Activated B cell treated with CpG ODN at 0.5 μM for 24 hours (primary cell): ENCODE measurements at regions of chr2 and their contacts with region 1.

Region 1: DNA sequence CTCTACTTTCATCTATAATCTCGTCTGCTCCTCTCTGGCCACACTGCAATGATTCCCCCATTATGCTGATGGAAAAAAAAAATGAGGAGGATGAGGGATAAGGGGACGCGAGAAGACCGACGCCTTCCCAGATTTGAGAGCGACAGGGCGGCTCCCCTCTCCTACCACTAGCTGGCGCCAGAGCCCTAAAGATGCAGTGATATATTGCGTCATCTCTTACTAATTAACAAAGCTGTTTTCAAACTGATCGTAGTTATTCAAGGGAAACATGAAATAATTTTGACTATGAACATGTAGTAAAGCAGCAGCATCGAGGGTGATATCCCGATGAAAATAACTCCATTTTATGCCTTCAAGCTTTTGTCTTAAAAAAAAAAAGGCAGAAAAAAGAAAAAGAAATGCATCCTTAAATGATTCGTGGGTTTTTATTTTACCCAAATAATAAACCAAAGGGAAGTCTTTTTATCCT is 48.0 kb upstream of the HNRNPA3 start:
- DNase-seq: peak; percentile 65
- ATAC-seq: peak; percentile 56
- H3K4me3 Mint-ChIP-seq: no peak overlapping the region
- H3K27ac Mint-ChIP-seq: no peak overlapping the region
- H3K4me1 Mint-ChIP-seq: peaks cover 5% of the 10 kb centered on the region
- H3K27me3 Mint-ChIP-seq: peaks cover 2% of the 10 kb centered on the region
- CTCF ChIP-seq: peak; percentile 89

Region 2: DNA sequence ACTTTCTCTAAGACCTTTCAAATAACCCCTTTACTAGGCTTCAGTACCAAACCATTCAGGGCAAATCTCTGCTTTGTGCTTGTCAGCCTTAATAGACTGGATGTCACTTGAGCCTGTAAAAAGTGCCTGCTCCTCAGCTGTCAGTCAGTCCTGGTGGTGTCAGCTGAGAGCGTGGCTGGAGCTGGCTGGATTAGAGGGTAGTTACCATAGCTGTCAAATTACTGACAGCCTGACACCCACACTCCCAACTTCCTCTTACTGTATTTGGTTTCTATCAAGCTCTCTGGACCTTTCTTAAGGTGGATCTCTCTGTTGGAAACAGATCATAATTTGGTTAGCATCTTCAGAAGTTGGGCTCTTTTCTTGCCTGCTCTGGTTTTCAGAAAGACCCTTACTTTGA is 1611.7 kb before region 1 on chr2:
- CTCF ChIA-PET with region 1: no interaction called
- POLR2A ChIA-PET with region 1: no interaction called
- intact Hi-C with region 1: no loop called
- DNase-seq: no peak
- ATAC-seq: no peak
- H3K4me3 Mint-ChIP-seq: no peak overlapping the region
- H3K27ac Mint-ChIP-seq: no peak overlapping the region
- H3K4me1 Mint-ChIP-seq: no peaks in the 10 kb centered on the region
- H3K27me3 Mint-ChIP-seq: peaks cover 11% of the 10 kb centered on the region
- CTCF ChIP-seq: no peak

Region 3: DNA sequence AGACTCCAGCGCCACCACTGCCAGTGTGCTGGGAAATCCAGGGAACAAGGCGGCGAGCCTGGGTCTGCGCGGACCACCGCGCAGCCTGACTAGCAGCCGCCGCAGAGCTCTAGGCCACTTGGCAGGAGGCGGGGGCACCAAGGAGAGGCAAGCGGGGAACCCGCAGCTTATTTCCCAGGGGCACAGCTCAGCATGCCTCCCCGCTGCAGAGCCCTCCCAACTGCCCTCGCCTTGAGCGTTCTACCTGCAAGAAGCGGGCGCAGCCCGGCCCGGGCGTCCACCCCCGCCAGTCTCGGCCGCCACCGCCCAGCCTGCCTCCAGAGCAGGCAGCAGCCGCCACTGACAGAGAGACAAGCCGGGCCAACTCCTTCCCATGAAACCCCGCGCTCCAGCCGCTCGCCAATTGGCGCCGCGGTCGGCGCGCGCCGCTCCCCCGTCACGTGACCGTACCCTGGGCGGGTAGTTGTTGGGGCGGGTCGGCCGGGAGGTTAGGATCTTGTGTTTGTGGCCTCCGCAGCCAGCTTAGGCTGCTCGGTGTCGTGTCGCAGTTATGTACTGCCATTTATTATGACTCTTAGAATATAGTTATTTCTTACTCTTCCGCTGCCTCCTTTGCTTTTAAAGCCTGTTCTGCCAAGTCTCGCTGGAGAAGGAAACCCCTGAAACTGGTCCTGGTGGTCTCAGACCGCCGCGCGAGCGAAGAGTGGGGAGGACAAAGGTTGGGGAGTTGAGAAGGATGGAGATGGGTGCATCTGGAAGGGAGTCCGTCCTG is 1162.5 kb before region 1 on chr2 and contains the start of gene LNPK:
- CTCF ChIA-PET with region 1: no interaction called
- POLR2A ChIA-PET with region 1: no interaction called
- intact Hi-C with region 1: loop called (anchors 10 kb)
- DNase-seq: peak; percentile 83
- ATAC-seq: peak; percentile 92
- H3K4me3 Mint-ChIP-seq: peak within 1 kb of the TSS; percentile 82
- H3K27ac Mint-ChIP-seq: peak within 1 kb of the TSS; percentile 31
- H3K4me1 Mint-ChIP-seq: peaks cover 16% of the 10 kb centered on the region
- H3K27me3 Mint-ChIP-seq: no peaks in the 10 kb centered on the region
- CTCF ChIP-seq: no peak
- total RNA-seq, gene LNPK: 15.2 TPM in 2 replicates

Region 4: GRCh38 chr2:177029480-177029879 is 135.1 kb before region 1 on chr2:
- CTCF ChIA-PET with region 1: no interaction called
- POLR2A ChIA-PET with region 1: no interaction called
- intact Hi-C with region 1: no loop called
- DNase-seq: no peak
- ATAC-seq: no peak
- H3K4me3 Mint-ChIP-seq: no peak overlapping the region
- H3K27ac Mint-ChIP-seq: no peak overlapping the region
- H3K4me1 Mint-ChIP-seq: no peaks in the 10 kb centered on the region
- H3K27me3 Mint-ChIP-seq: peaks cover 7% of the 10 kb centered on the region
- CTCF ChIP-seq: no peak

Region 5: DNA sequence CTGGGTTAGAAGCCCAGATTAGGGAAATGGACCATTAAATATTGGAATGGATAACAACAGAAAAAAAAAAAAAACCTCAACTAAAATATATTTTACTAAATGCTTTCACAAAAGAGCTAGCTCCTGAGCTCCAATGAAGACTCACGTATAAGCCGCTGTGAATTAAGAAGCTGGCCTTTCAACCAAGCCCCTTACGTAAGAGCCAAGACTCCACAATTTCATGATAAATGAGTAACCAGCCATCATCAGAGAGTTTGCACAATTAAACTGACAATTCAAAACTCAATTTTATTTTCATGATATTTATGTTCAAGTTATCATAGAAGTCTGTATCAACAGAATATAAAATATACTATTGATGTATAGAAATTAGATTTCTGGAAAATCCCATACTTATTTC is 22.8 kb before region 1 on chr2:
- CTCF ChIA-PET with region 1: no interaction called
- POLR2A ChIA-PET with region 1: no interaction called
- intact Hi-C with region 1: no loop called
- DNase-seq: no peak
- ATAC-seq: no peak
- H3K4me3 Mint-ChIP-seq: no peak overlapping the region
- H3K27ac Mint-ChIP-seq: no peak overlapping the region
- H3K4me1 Mint-ChIP-seq: no peaks in the 10 kb centered on the region
- H3K27me3 Mint-ChIP-seq: peaks cover 16% of the 10 kb centered on the region
- CTCF ChIP-seq: no peak

Region 6: GRCh38 chr2:177195194-177195593 is 30.6 kb after region 1 on chr2:
- CTCF ChIA-PET with region 1: interaction called, 18 read pairs
- POLR2A ChIA-PET with region 1: no interaction called
- intact Hi-C with region 1: no loop called
- DNase-seq: no peak
- ATAC-seq: no peak
- H3K4me3 Mint-ChIP-seq: no peak overlapping the region
- H3K27ac Mint-ChIP-seq: no peak overlapping the region
- H3K4me1 Mint-ChIP-seq: no peaks in the 10 kb centered on the region
- H3K27me3 Mint-ChIP-seq: no peaks in the 10 kb centered on the region
- CTCF ChIP-seq: no peak

Region 7: GRCh38 chr2:177275041-177276020 is 110.7 kb after region 1 on chr2:
- CTCF ChIA-PET with region 1: interaction called, 10 read pairs
- POLR2A ChIA-PET with region 1: no interaction called
- intact Hi-C with region 1: no loop called
- DNase-seq: no peak
- ATAC-seq: no peak
- H3K4me3 Mint-ChIP-seq: no peak overlapping the region
- H3K27ac Mint-ChIP-seq: no peak overlapping the region
- H3K4me1 Mint-ChIP-seq: peaks cover 4% of the 10 kb centered on the region
- H3K27me3 Mint-ChIP-seq: no peaks in the 10 kb centered on the region
- CTCF ChIP-seq: no peak

Region 8: DNA sequence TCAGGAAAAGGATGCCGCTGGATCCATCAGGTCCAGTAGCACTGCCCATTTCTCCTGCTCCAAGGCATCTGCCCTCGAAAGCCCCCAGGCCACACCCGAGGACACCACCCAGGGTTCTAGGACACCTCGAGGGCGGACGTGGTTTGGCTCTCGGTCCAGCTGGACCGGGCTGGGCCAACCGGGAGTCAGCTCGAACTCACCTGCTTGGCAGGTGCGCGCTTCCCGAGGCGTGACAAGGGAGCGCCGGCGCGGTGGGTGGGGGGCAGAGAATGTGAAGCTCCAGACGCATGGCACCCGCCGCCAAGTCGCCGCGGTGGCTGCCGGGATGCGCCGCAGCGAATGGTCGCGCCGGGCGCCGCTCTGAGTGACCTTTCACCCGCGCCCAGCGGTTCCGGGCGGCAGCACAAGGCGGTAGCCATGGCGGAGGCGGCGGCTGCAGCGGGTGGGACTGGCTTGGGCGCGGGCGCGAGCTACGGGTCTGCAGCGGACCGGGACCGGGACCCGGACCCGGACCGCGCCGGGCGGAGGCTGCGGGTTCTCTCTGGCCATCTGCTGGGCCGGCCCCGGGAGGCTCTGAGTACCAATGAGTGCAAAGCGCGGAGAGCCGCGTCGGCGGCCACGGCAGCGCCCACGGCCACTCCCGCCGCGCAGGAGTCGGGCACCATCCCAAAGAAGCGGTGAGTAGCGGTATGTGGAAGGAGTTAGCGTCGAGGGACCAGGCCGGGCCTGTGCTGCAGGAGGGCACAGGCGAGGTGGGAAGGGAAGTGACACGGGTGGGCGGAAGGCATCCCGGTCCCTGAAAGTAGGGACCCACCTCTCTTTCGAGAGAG is 228.0 kb after region 1 on chr2 and contains the start of gene AGPS:
- CTCF ChIA-PET with region 1: interaction called, 10 read pairs
- POLR2A ChIA-PET with region 1: interaction called, 9 read pairs
- intact Hi-C with region 1: no loop called
- DNase-seq: peak; percentile 66
- ATAC-seq: peak; percentile 93
- H3K4me3 Mint-ChIP-seq: peak within 1 kb of the TSS; percentile 92
- H3K27ac Mint-ChIP-seq: peak within 1 kb of the TSS; percentile 69
- H3K4me1 Mint-ChIP-seq: peaks cover 42% of the 10 kb centered on the region
- H3K27me3 Mint-ChIP-seq: no peaks in the 10 kb centered on the region
- CTCF ChIP-seq: no peak
- total RNA-seq, gene AGPS: 29.0 and 29.9 TPM in 2 replicates

Region 9: GRCh38 chr2:177467646-177468045 is 303.0 kb after region 1 on chr2:
- CTCF ChIA-PET with region 1: no interaction called
- POLR2A ChIA-PET with region 1: no interaction called
- intact Hi-C with region 1: no loop called
- DNase-seq: no peak
- ATAC-seq: no peak
- H3K4me3 Mint-ChIP-seq: no peak overlapping the region
- H3K27ac Mint-ChIP-seq: no peak overlapping the region
- H3K4me1 Mint-ChIP-seq: no peaks in the 10 kb centered on the region
- H3K27me3 Mint-ChIP-seq: no peaks in the 10 kb centered on the region
- CTCF ChIP-seq: no peak

Region 10: GRCh38 chr2:177489719-177490301 is 325.2 kb after region 1 on chr2:
- CTCF ChIA-PET with region 1: no interaction called
- POLR2A ChIA-PET with region 1: no interaction called
- intact Hi-C with region 1: loop called (anchors 1 kb)
- DNase-seq: no peak
- ATAC-seq: no peak
- H3K4me3 Mint-ChIP-seq: no peak overlapping the region
- H3K27ac Mint-ChIP-seq: no peak overlapping the region
- H3K4me1 Mint-ChIP-seq: no peaks in the 10 kb centered on the region
- H3K27me3 Mint-ChIP-seq: no peaks in the 10 kb centered on the region
- CTCF ChIP-seq: no peak

Region 11: GRCh38 chr2:177618255-177619253 is 453.9 kb after region 1 on chr2:
- CTCF ChIA-PET with region 1: no interaction called
- POLR2A ChIA-PET with region 1: no interaction called
- intact Hi-C with region 1: loop called (anchors 2 kb)
- DNase-seq: peak; percentile 87
- ATAC-seq: peak; percentile 89
- H3K4me3 Mint-ChIP-seq: peak overlapping the region; percentile 97
- H3K27ac Mint-ChIP-seq: peak overlapping the region; percentile 100
- H3K4me1 Mint-ChIP-seq: peaks cover 7% of the 10 kb centered on the region
- H3K27me3 Mint-ChIP-seq: peaks cover 3% of the 10 kb centered on the region
- CTCF ChIP-seq: no peak